ENCODE measurements at regions of chr21 and their contacts with region 1.

Region 1: DNA sequence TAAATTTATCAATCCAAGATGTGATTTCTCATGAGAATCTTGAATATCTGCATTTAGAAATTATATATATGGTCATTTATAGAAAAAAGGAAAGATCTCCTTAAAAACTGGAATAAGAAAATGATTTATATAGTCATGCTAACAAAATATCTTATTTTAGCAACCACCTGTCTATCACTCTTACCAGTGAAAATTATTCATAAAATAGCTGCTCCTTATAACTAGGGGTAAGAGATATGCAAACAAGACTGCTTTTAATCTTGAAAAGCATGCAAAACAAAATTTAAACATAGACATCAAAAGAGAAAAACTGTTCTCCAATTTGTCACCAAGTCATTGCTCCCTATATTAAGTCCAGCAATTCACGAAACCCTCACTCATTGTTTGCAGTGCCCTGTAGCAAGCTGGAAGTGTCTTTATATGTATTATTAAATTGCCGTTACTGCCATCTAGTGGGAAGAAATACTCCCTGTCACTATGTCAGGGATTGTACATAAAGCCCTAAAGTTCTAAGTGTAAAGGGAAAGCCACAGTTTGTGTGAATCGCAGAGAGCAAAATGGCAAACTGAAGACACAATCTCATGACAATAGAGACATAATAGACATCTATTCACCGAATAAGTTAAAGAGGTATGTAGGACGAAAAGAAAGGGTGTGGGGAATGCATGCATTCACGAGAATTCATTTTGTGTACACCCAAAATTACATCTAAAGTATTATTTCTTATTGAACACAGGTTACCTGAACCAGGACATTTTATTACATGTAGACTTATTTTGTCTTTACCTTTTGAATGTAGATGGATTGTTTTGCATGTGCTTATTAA is 600.5 kb downstream of the USP25 start:
- DNase-seq: peak; percentile 42
- ATAC-seq: peak; percentile 36
- H3K4me3 ChIP-seq: no peak overlapping the region
- H3K4me3 Mint-ChIP-seq: no peak overlapping the region
- H3K27ac ChIP-seq: no peak overlapping the region
- H3K27ac Mint-ChIP-seq: no peak overlapping the region
- H3K4me1 ChIP-seq: no peaks in the 10 kb centered on the region
- H3K4me1 Mint-ChIP-seq: no peaks in the 10 kb centered on the region
- H3K27me3 ChIP-seq: no peaks in the 10 kb centered on the region
- H3K27me3 Mint-ChIP-seq: no peaks in the 10 kb centered on the region
- CTCF ChIP-seq: peak; percentile 74

Region 2: GRCh38 chr21:16082038-16082816 is 248.1 kb before region 1 on chr21:
- CTCF ChIA-PET with region 1: no interaction called
- POLR2A ChIA-PET with region 1: no interaction called
- intact Hi-C with region 1: loop called (anchors 2 kb)
- DNase-seq: no peak
- ATAC-seq: no peak
- H3K4me3 ChIP-seq: no peak overlapping the region
- H3K4me3 Mint-ChIP-seq: no peak overlapping the region
- H3K27ac ChIP-seq: no peak overlapping the region
- H3K27ac Mint-ChIP-seq: no peak overlapping the region
- H3K4me1 ChIP-seq: no peaks in the 10 kb centered on the region
- H3K4me1 Mint-ChIP-seq: no peaks in the 10 kb centered on the region
- H3K27me3 ChIP-seq: no peaks in the 10 kb centered on the region
- H3K27me3 Mint-ChIP-seq: no peaks in the 10 kb centered on the region
- CTCF ChIP-seq: peak; percentile 53

Measured in B cell (primary cell).